Left colon (tissue), 2 donors: ENCODE measurements at regions of chr9 and their contacts with region 1.

Region 1: DNA sequence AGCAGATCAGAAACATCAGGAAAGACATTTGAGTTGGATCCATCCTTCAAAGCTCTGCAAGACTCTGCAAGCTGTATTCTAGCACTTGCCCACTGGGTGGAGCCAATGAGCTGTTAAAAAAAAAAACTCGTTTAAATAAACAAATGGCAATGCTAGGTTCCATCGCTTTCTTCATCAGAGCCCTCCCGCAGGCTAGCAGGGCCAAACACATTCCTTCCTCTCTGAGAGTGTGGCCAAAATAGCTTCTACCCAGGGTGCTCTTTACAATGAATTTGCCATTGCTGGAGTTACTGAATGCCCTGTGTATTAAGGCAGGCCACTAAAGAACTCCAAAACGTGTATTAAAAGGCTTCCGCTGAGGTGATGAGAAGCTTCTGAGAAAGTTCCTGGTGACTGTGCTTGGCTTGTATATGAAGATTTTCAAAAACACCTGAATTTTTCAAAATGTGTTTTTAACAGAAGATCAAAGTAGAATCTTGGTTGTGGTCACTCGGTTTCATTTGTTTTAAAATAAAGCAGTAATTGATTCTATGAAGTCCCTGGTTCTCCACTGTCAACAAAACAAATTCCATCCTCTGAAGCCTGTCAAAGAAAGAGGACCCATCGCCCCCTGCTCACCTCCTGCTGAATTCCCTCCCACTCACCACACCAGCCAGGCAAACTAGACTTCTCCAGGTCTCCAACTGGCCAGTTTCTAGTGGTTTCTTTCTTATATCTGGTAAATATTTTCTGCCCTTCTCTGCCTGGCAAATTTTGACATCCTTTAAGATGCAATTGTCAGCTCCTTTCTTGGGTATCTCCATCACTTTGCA is 36.5 kb upstream of the EQTN start:
- DNase-seq: peak in 1 of 2 donors; percentile 50
- ATAC-seq: peak; percentile 68

Region 2: GRCh38 chr9:27276193-27277030 is 57.0 kb before region 1 on chr9:
- intact Hi-C with region 1: no loop called
- DNase-seq: no peak
- ATAC-seq: peak; percentile 72

Region 3: GRCh38 chr9:27529316-27530278 is 196.2 kb after region 1 on chr9 and contains the start of gene MOB3B:
- intact Hi-C with region 1: loop called (anchors 5 to 10 kb)
- DNase-seq: peak; percentile 78 to 91
- ATAC-seq: peak; percentile 72
- total RNA-seq, gene MOB3B: 42.2 to 47.1 TPM

Region 4: DNA sequence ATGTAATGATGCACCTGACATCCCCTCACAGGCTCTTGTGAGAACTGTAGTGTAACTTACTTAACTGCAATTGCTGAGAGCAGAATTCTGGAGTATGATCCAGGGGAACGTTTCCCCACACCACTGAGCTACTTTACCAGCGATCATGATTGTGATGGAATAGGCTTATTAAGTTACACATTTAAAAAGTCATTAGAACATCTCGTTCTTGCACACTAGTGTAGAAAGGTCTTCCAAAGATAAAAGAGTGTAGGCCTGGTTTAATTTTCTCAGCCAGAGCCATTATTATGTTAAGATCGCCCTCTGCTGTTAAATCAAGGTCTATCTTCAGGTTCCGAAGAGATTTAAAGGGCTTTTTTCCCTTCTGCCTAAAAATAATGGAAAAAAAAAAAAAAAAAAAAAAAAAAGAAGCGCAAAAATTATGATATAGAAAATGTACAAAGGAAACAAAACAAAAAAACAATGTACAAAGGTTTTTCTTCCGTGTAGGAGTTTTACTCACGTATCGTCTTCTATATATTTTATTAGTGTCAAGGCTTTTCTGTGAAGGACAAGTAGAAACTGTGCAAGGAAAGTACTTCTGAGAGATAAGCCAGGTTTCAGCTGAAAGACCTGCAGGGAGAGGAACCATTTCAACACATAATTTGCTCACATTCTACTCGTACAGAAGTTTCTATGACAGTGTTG is 214.8 kb after region 1 on chr9:
- intact Hi-C with region 1: loop called in 1 of 2 experiments (anchors 1 kb)
- DNase-seq: no peak
- ATAC-seq: peak; percentile 68

Region 5: GRCh38 chr9:27801545-27801944 is 468.1 kb after region 1 on chr9:
- intact Hi-C with region 1: no loop called
- DNase-seq: no peak
- ATAC-seq: no peak